Activated naive CD4-positive, alpha-beta T cell treated with anti-CD3 and anti-CD28 coated beads, Interleukin-2, amount 10 ng/mL, durations not matched to agents 7 days and 5 days (primary cell): ENCODE measurements at regions of chr16 and their contacts with region 1.

Region 1: GRCh38 chr16:29700253-29700987 is 21.4 kb downstream of the QPRT start:
- DNase-seq: peak; percentile 82
- H3K4me3 Mint-ChIP-seq: peak overlapping the region; percentile 15
- H3K27ac Mint-ChIP-seq: peak overlapping the region; percentile 95
- H3K4me1 Mint-ChIP-seq: peaks cover 46% of the 10 kb centered on the region
- H3K27me3 Mint-ChIP-seq: peaks cover 20% of the 10 kb centered on the region

Region 2: DNA sequence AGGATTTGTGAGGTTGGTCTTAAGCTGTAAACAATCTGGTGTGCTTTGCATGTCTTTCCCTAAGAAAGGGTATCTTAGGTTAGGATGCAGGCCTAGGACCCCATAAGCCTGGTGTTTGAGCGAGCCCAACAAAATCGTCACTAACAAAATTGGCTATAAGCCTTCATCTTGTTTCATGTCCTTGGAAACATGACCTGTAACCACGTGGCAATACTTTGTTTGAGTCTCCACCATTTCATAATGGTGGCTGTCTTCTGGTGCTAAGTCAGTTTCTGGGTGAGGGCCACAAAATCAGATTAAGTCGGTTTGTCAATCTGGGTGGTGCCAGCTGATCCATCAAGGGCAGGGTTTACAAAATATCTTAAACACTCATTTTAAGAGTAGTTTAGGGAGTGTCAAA is 12.3 kb after region 1 on chr16:
- CTCF ChIA-PET with region 1: interaction called, 24 read pairs
- DNase-seq: no peak
- H3K4me3 Mint-ChIP-seq: no peak overlapping the region
- H3K27ac Mint-ChIP-seq: no peak overlapping the region
- H3K4me1 Mint-ChIP-seq: peaks cover 12% of the 10 kb centered on the region
- H3K27me3 Mint-ChIP-seq: peaks cover 25% of the 10 kb centered on the region

Region 3: GRCh38 chr16:29729116-29729521 is 28.7 kb after region 1 on chr16:
- CTCF ChIA-PET with region 1: interaction called, 21 read pairs
- DNase-seq: no peak
- H3K4me3 Mint-ChIP-seq: no peak overlapping the region
- H3K27ac Mint-ChIP-seq: no peak overlapping the region
- H3K4me1 Mint-ChIP-seq: peaks cover 35% of the 10 kb centered on the region
- H3K27me3 Mint-ChIP-seq: peaks cover 35% of the 10 kb centered on the region

Region 4: GRCh38 chr16:29790183-29790952 is 89.9 kb after region 1 on chr16 and contains the start of gene KIF22:
- CTCF ChIA-PET with region 1: interaction called, 27 read pairs
- DNase-seq: peak; percentile 100
- H3K4me3 Mint-ChIP-seq: peak within 1 kb of the TSS; percentile 96
- H3K27ac Mint-ChIP-seq: peak within 1 kb of the TSS; percentile 96
- H3K4me1 Mint-ChIP-seq: peaks cover 55% of the 10 kb centered on the region
- H3K27me3 Mint-ChIP-seq: no peaks in the 10 kb centered on the region

Region 5: DNA sequence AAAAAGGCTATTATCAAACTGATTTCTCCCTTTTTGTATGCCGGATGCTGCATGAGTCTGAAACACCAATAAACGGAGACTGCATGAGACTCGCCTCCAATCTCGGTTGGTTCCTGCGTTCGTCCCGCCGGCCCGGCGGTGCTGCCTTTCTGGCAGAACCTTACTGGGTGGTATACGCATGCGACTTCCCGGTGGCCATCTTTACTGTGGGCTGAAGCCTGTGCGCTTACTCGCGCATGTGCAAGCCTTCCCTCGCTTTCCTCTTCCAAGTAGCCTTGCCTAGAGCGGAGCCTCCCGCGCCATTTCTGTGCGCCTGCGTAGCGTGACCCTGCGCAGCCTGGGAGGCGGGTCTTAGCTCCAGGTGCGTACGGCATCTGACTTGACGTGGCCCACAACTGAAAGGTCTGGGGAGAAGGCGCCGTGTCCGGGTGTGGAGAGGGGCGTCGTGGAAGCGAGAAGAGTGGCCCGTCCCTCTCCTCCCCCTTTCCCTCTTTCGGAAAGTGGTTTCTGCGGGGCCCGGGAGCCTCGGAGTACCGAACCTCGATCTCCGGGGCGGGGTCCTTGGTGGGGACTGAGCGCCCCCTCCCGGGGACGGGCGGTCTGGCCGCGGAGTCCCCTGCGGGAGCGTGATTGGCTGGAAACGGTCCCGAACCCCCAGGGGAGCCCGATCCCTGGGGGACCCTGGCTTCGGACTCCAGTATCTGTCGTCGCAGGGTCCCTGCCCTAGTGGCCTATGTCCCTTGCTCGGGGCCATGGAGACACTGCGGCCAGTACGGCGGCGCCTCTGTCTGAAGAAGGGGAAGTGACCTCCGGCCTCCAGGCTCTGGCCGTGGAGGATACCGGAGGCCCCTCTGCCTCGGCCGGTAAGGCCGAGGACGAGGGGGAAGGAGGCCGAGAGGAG is 115.6 kb after region 1 on chr16 and contains the start of gene PAGR1:
- CTCF ChIA-PET with region 1: interaction called, 23 read pairs
- DNase-seq: peak; percentile 99
- H3K4me3 Mint-ChIP-seq: peak within 1 kb of the TSS; percentile 84
- H3K27ac Mint-ChIP-seq: peak within 1 kb of the TSS; percentile 94
- H3K4me1 Mint-ChIP-seq: peaks cover 75% of the 10 kb centered on the region
- H3K27me3 Mint-ChIP-seq: peaks cover 43% of the 10 kb centered on the region

Region 6: DNA sequence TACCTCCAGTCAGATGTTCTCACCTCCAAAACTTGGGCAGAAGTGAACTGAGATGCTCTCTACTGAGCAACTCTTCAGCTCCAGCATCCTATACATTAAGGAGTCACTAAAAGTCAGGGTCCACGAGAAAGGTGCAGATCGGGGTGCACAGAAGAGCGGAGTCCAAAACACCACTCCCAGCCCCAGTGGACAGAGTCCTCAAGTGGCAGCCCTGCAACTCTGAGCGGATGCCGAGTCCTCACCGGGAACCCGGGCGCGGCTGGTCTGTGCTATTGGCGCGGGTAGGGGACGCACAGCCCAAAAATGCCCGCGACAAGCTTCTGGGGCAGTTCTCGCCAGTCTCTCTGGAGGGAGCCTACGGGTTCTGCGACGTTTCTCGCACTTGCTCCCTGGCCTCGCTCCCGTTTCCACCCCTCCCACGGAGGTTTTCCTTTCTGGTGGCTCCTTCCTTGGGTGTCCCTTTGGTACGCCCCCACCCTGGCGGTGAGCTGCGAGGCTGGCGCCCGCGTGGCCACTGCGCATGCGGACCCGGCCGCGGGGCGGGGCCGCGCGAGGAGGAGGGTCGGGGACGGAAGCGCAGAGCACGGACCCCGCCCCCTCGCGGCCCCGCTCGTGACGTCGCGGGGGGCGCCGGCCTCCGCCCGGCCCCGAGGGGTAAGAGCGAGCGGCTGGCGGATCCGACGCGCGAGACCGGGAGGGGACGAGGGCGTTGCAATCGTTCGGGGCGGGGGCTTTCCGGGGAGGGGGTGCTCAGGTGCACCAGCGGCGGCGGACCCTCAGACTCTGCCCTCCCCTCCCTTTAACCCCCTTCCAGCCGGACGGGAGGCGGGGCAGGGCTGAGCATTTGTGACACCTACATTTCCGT is 261.3 kb after region 1 on chr16 and contains the start of gene TMEM219:
- CTCF ChIA-PET with region 1: no interaction called
- DNase-seq: peak; percentile 94
- H3K4me3 Mint-ChIP-seq: peak within 1 kb of the TSS; percentile 88
- H3K27ac Mint-ChIP-seq: peak within 1 kb of the TSS; percentile 90
- H3K4me1 Mint-ChIP-seq: peaks cover 25% of the 10 kb centered on the region
- H3K27me3 Mint-ChIP-seq: peaks cover 7% of the 10 kb centered on the region

Region 7: GRCh38 chr16:30005341-30006094 is 305.1 kb after region 1 on chr16:
- CTCF ChIA-PET with region 1: interaction called, 14 read pairs
- DNase-seq: peak; percentile 60
- H3K4me3 Mint-ChIP-seq: no peak overlapping the region
- H3K27ac Mint-ChIP-seq: peak overlapping the region; percentile 11
- H3K4me1 Mint-ChIP-seq: peaks cover 5% of the 10 kb centered on the region
- H3K27me3 Mint-ChIP-seq: peaks cover 30% of the 10 kb centered on the region